PC-3 (cell line): ENCODE measurements at regions of chr2 and their contacts with region 1.

Region 1: GRCh38 chr2:70301344-70302194 is at the start of gene FAM136A:
- DNase-seq: peak; percentile 86
- ATAC-seq: peak; percentile 85
- H3K4me3 ChIP-seq: peak within 1 kb of the TSS; percentile 71
- H3K27ac ChIP-seq: peak within 1 kb of the TSS; percentile 17; the same call in 1 of the 2 replicates
- H3K4me1 ChIP-seq: peaks cover 7% of the 10 kb centered on the region
- H3K27me3 ChIP-seq: no peaks in the 10 kb centered on the region
- CTCF ChIP-seq: peak; percentile 78
- total RNA-seq, gene FAM136A: 67.6 and 70.8 TPM in 2 replicates

Region 2: DNA sequence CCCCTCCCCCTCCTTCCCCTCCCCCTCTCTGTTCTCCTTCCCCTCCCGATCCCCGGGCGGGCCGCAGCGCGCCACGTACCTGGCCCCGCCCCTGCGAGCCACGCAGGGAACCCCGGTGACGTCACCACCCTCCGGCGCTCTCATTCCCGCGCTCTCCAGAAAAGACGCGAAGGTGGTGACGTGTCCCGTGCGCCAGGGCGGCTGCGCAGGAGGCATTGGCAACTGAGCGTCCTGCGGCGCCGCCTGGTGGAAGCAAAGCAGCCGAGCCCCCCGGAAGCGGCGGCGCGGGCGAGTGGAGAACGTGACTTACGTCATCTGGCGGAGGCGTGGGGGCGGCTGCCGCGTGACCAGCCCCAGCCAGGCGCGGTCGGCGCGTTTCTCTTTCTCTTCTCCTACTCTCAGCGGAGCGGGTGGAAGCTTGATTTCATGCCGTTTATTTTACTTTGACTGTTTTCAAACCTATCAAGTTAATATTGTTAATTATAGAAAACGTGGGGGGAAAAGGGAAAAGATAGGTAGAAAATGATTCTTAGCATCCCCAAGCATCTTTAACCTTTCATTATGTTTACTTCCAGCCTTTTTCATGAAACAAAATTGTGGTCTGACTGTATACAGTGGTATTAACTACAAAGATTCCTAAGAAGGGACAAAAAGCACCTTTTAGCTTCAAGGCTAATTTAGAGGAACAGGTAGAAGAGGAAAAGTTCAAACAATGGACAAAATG is 158.8 kb before region 1 on chr2:
- CTCF ChIA-PET with region 1: no interaction called
- POLR2A ChIA-PET with region 1: no interaction called
- intact Hi-C with region 1: no loop called
- DNase-seq: peak; percentile 100
- ATAC-seq: peak; percentile 60
- H3K4me3 ChIP-seq: peak overlapping the region; percentile 67
- H3K27ac ChIP-seq: peak overlapping the region; percentile 87
- H3K4me1 ChIP-seq: peaks cover 23% of the 10 kb centered on the region
- H3K27me3 ChIP-seq: no peaks in the 10 kb centered on the region
- CTCF ChIP-seq: peak; percentile 89

Region 3: DNA sequence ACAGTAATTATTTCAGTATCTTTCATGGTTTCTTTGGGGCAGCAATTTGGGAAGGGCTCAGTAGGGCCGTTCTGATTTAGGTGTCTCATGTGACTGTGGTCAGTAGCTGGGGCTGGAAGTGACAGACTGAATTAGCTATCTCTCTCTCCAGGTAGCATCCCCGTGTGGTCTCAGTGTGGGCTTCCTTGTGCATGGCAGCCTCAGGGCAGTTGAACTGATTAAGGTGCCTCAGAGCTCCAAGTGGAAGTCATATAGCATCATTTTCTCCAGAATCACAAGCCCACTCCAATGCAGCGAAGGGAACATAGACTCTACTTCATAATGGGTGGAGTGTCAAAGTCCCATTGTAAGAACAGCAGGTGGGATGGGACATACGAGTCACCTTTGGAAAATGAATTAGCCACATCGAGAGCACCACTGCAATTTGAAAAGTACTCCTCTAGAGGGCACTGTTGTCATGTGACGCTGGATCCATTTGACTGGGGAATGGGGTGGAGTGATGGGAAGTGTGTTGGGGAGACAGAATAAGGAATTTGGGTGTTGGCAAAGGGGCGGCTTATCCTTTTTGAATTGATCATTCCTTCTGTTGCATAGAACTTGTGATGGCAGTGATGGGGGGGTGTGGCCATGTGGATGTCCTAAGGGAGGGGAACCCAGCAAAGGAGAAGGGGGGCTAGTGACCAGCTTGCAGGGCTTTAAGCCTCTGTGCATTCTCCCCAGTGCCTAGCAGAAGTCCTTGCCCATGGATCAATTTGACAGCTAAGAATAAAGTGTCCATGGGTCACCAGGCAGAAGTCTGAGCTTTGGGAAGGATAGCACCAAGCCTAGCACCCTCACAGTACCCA is 39.6 kb after region 1 on chr2:
- CTCF ChIA-PET with region 1: no interaction called
- POLR2A ChIA-PET with region 1: no interaction called
- intact Hi-C with region 1: loop called (anchors 1 kb)
- DNase-seq: peak; percentile 88
- ATAC-seq: peak; percentile 75
- H3K4me3 ChIP-seq: no peak overlapping the region
- H3K27ac ChIP-seq: no peak overlapping the region
- H3K4me1 ChIP-seq: peaks cover 33% of the 10 kb centered on the region
- H3K27me3 ChIP-seq: no peaks in the 10 kb centered on the region
- CTCF ChIP-seq: peak; percentile 95

Region 4: DNA sequence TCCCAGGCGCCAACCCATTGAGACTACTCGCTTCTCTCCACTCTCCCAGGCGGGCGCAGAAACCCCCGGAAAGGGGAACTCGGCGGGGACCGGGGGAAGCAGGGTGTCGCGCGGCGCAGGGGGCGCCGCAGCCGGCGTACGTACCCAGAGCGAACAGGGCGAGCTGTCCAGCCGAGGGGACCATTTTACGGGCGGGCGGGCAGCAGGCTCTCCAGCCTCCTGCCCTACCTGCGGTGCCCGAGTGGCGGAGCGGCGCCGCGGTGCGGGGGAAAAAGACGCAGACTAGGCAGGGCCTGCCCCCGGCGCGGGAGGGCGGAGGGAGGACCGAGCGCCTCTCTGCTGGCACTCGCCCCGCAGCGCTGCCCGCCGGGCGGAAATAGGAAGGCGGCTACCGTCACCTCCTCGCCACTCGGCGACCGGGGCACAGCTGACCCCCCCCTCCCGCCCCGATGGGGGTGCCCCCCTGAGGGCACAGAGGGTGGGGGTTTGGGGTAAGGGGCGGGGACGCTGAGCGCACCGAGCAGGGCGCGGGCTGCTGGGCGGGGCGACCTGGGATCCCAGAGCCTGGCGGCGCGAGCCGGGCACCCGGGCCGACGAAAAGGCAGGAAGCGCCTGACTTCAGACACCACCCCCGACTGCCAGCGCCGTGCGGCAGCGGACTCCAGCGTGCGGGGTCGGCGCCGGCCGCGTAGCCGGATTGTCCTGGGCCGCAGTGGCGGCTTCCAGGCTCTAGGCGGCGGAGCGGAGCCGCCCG is 252.2 kb after region 1 on chr2 and contains the start of gene TGFA:
- CTCF ChIA-PET with region 1: interaction called, 7 read pairs
- POLR2A ChIA-PET with region 1: interaction called, 5 read pairs
- intact Hi-C with region 1: loop called (anchors 1 kb)
- DNase-seq: peak; percentile 95
- ATAC-seq: peak; percentile 79
- H3K4me3 ChIP-seq: peak within 1 kb of the TSS; percentile 96
- H3K27ac ChIP-seq: peak within 1 kb of the TSS; percentile 87
- H3K4me1 ChIP-seq: peaks cover 39% of the 10 kb centered on the region
- H3K27me3 ChIP-seq: no peaks in the 10 kb centered on the region
- CTCF ChIP-seq: peak; percentile 78
- total RNA-seq, gene TGFA: 45.0 and 54.7 TPM in 2 replicates

Region 5: GRCh38 chr2:70647873-70648481 is 346.4 kb after region 1 on chr2:
- CTCF ChIA-PET with region 1: interaction called, 8 read pairs
- POLR2A ChIA-PET with region 1: interaction called, 3 read pairs
- intact Hi-C with region 1: loop called (anchors 1 kb)
- DNase-seq: peak; percentile 85
- ATAC-seq: peak; percentile 76
- H3K4me3 ChIP-seq: no peak overlapping the region
- H3K27ac ChIP-seq: no peak overlapping the region
- H3K4me1 ChIP-seq: no peaks in the 10 kb centered on the region
- H3K27me3 ChIP-seq: peaks cover 13% of the 10 kb centered on the region
- CTCF ChIP-seq: peak; percentile 97